Activated naive CD4-positive, alpha-beta T cell treated with anti-CD3 and anti-CD28 coated beads for 36 hours (primary cell): ENCODE measurements at regions of chr2 and their contacts with region 1.

Region 1: DNA sequence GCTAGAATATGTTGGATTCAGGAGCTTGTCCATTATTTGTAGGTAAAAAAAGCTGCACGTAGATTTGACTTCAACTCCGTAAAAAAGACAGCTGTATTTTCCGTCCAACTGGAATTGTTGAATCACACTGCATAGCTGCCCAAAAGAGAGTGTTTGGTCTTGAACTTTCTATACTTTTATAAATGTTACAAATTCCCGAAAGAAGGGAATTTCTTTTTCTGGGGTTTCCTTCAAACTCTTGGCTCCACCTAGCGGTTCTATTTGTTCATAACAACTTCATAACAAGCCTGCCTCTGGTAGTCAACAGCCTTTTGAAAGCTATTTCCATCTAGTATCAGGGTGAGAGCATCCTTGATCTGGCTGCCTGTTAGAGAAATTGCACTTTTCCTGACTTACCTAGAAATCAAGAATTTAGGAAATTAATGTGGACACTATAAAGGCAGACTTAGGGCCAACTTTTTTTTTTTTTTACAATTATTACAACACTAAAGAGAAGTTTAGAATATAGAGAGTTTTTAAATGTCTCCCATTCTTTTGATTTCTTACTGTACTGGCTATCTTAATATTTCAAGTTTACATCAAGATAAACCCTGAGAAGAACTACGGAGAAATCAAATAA is 48.1 kb downstream of the TMEM185B start:
- DNase-seq: peak; percentile 28
- H3K4me3 Mint-ChIP-seq: no peak overlapping the region
- H3K27ac Mint-ChIP-seq: peak overlapping the region; percentile 60
- H3K4me1 Mint-ChIP-seq: peaks cover 47% of the 10 kb centered on the region
- H3K27me3 Mint-ChIP-seq: no peaks in the 10 kb centered on the region

Region 2: DNA sequence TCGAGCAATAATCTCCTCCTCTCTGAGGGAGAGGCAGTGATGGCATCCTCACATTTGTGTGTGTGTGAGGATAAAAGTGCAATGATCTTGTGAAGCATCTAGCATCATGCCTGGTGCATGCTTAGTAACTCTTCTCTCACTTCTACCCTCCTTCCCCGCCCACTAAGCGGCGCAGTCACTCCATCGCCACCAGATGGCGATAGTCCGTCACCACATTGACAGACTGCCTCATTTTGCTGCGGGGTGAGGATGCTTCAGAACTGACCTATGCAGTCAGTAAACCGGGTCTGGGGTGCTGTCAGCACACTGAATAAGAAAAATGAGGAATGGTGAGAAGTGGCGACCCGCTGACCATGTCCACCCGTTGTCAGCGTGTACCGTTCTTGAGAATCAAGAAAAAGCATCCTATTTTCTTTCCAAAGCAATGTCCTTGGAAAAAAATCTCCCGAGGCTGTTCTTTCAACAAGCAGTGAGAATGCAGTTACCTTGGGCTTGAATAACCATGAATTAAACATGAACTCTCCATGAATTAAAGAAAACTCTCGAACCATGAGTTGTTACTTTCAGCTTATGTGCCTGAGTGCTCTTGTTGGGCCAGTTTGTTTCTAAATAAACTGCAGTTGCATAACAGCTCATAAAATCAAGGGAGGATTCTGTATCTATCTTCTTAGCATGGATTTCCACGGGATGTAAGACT is 533.4 kb before region 1 on chr2:
- CTCF ChIA-PET with region 1: interaction called, 59 read pairs
- intact Hi-C with region 1: loop called (anchors 1 kb)
- DNase-seq: peak; percentile 84
- H3K4me3 Mint-ChIP-seq: no peak overlapping the region
- H3K27ac Mint-ChIP-seq: no peak overlapping the region
- H3K4me1 Mint-ChIP-seq: peaks cover 1% of the 10 kb centered on the region
- H3K27me3 Mint-ChIP-seq: no peaks in the 10 kb centered on the region

Region 3: DNA sequence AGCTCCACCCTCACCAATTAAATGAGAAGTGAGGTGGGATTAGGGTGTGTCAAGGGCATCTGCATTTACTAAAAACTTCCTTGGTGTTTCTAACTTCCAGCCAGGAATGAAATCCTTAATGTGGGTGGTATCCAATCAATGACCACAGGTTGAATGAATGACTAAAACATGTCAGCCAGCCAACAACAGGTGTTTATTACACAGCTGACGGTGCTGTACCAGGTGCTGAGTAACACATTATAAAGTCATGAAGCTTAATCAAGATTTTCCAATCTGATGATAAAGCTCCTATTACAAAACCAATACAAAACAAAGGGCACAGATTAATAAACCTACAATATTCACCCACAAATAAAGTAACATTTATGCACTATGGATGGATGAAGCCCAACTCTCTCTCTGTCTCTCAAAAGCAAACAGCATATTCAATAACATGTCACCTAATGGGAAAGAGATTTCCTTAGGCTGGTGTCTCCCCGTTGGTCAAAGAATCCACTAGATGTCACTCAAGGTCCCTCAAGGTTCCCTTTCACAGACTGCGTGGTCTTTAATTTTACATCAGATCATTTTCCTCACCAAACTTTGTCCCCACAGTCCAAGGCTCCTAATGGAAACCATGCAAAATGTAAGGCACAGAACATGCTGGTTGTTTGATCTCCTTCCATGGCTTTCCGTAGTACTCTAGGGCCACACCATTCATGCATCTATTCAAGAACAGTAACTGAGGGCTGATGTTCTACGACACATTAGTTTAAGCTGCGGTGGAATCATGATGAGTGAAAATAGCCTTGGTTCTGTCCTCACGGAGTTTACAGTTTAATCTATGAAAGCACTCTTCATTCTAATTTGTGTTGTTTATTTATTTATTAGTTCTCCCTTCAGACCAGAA is 421.8 kb before region 1 on chr2:
- CTCF ChIA-PET with region 1: interaction called, 30 read pairs
- intact Hi-C with region 1: loop called (anchors 1 kb)
- DNase-seq: peak; percentile 43
- H3K4me3 Mint-ChIP-seq: no peak overlapping the region
- H3K27ac Mint-ChIP-seq: no peak overlapping the region
- H3K4me1 Mint-ChIP-seq: peaks cover 14% of the 10 kb centered on the region
- H3K27me3 Mint-ChIP-seq: no peaks in the 10 kb centered on the region

Region 4: DNA sequence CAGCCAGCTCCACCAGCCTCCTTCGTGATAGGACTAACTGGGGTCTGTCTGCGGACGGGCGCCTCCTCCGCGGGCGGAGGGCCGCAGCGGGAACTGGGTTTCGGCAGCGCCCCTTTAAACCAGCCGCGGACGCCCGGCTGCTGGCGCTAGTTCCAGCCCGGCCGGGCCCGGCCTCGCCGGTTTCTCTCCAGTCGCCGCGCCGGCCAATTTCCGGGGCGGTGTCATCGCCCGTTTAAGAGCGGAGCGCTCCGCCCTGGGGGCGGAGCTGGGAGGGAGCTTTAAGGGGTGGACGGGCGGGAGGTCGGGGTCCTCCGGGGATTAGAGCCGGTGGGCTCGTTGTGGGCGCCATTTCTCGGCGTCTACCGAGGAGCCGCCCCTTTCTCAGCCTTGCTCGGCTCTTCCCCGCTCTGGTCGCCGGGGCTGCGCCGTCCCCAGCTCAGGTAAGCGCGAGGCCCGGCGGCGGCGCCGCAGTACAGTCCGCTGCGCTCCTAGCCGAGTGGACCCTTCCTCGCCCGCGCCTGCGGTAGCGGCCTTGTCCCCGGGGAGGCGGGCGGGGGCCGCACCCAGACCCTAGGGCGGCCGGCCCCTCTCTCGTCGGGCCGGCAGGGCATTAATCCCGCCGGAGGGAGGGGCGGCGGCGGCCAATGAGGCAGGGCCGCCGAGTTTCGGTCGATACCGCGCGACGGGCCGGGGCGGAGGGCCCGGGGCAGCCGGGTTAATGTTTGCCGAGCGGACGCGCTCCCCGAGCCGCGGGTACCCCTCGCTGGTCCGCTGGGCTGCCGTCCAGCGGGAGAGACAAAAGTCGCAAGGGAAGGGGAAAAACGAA is 162.1 kb before region 1 on chr2 and contains the start of gene EPB41L5:
- CTCF ChIA-PET with region 1: interaction called, 7 read pairs
- intact Hi-C with region 1: loop called (anchors 1 kb)
- DNase-seq: peak; percentile 79
- H3K4me3 Mint-ChIP-seq: peak within 1 kb of the TSS; percentile 77
- H3K27ac Mint-ChIP-seq: no peak within 1 kb of the TSS
- H3K4me1 Mint-ChIP-seq: peaks cover 8% of the 10 kb centered on the region
- H3K27me3 Mint-ChIP-seq: no peaks in the 10 kb centered on the region
- total RNA-seq, gene EPB41L5: 2.3 to 2.5 TPM

Region 5: DNA sequence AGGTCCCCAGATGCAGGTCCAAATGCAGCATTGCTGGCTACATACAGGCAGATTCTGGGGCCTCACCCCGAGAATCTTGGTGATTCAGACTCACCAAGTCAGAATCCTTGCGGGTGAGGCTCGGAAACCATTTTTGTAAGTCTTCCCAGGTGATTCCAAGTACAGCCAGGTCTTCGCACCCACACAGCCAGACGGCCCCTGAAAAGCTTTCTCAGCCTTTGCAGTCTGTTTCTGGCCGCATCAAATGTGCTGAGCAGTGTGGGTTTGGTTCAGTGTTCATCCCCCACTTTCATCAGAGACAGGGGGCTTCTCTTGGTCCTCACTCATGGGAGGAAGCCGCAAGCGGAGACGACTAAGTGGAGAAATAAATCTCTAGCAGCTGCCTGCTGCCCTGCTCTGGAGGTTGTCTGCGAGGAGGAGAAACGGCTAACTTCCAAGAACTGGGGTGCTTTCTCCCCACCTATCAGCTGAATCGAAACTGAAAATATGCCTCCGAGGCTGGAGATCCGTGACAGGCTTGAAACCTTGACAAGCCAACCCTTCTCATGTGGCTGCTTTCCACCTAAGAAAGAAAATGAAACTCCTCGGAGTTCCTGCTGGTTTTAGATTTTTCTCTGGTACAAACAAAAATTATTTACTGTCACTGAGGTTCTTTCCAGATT is 57.0 kb after region 1 on chr2:
- CTCF ChIA-PET with region 1: interaction called, 4 read pairs
- intact Hi-C with region 1: loop called (anchors 1 kb)
- DNase-seq: peak; percentile 86
- H3K4me3 Mint-ChIP-seq: peak overlapping the region; percentile 82
- H3K27ac Mint-ChIP-seq: peak overlapping the region; percentile 94
- H3K4me1 Mint-ChIP-seq: peaks cover 47% of the 10 kb centered on the region
- H3K27me3 Mint-ChIP-seq: no peaks in the 10 kb centered on the region

Region 6: DNA sequence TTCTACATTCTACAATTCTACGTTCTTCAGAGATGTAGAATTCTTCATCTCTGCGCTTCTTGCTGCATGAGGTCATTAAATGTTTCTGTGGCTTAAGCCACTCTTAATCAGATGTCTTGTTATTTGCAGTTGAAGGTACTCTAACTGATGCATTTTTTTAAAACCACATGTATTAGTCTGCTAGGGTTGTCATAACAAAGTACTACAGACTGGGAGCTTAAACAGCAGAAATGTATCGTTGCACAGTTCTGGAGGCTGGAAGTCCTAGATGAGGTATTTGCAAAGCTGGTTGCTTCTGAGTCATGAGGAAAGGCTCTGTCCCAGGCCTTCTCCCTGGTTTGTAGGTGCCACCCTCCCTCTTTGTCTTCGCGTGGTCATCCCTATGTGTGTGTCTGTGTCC is 384.3 kb after region 1 on chr2:
- CTCF ChIA-PET with region 1: no interaction called
- intact Hi-C with region 1: no loop called
- DNase-seq: no peak
- H3K4me3 Mint-ChIP-seq: no peak overlapping the region
- H3K27ac Mint-ChIP-seq: no peak overlapping the region
- H3K4me1 Mint-ChIP-seq: no peaks in the 10 kb centered on the region
- H3K27me3 Mint-ChIP-seq: peaks cover 18% of the 10 kb centered on the region

Region 7: DNA sequence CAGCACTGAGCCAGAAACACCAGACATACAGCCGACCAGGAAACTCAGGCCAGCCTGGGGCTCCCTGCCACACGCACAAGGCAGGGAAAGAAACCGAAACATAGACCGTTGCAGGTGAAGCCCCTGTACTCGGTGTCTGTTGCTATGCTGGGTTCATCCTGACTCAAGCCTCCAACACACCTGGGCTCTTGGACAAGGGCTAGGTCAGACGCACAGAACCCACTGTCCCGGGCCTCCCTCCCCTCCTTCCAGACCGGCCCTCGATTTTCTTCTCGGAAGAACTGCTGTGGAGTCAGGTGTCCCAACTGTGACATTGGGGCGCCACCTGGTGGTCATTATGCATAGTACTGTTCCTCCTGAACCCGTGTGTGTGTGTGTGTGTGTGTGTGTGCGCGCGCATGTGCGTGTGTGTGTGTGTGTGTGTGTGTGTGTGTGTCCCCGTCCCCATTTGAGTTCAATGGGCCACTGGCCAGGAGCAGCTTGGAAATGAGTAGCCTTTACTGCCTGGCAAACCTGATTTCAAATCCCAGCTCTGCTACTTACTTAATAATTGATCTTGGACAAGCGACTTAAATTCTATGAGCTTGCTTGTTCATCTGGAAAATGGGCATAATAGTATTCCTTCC is 505.2 kb after region 1 on chr2:
- CTCF ChIA-PET with region 1: interaction called, 5 read pairs
- intact Hi-C with region 1: loop called (anchors 1 kb)
- DNase-seq: peak; percentile 87
- H3K4me3 Mint-ChIP-seq: no peak overlapping the region
- H3K27ac Mint-ChIP-seq: no peak overlapping the region
- H3K4me1 Mint-ChIP-seq: peaks cover 2% of the 10 kb centered on the region
- H3K27me3 Mint-ChIP-seq: peaks cover 15% of the 10 kb centered on the region